Naive thymus-derived CD4-positive, alpha-beta T cell (primary cell): ENCODE measurements at regions of chr12 and their contacts with region 1.

Region 1: GRCh38 chr12:9897535-9897934 is 16.2 kb downstream of the KLRF2 start:
- DNase-seq: no peak
- ATAC-seq: no peak
- H3K4me3 ChIP-seq: no peak overlapping the region
- H3K4me3 Mint-ChIP-seq: no peak overlapping the region
- H3K27ac ChIP-seq: no peak overlapping the region
- H3K27ac Mint-ChIP-seq: no peak overlapping the region
- H3K4me1 ChIP-seq: no peaks in the 10 kb centered on the region
- H3K4me1 Mint-ChIP-seq: peaks cover 0 to 10% (median 4%) of the 10 kb centered on the region in 7 donors
- H3K27me3 ChIP-seq: no peaks in the 10 kb centered on the region
- H3K27me3 Mint-ChIP-seq: peaks cover 0 to 29% (median 0%) of the 10 kb centered on the region in 5 donors

Region 2: GRCh38 chr12:9883175-9883574 is 14.4 kb before region 1 on chr12:
- CTCF ChIA-PET with region 1: no interaction called
- POLR2A ChIA-PET with region 1: interaction called, 5 read pairs
- intact Hi-C with region 1: loop called in 1 of 2 experiments (anchors 1 kb)
- DNase-seq: no peak
- ATAC-seq: no peak
- H3K4me3 ChIP-seq: no peak overlapping the region
- H3K4me3 Mint-ChIP-seq: no peak overlapping the region
- H3K27ac ChIP-seq: no peak overlapping the region
- H3K27ac Mint-ChIP-seq: no peak overlapping the region
- H3K4me1 ChIP-seq: no peaks in the 10 kb centered on the region
- H3K4me1 Mint-ChIP-seq: peaks cover 4 to 18% (median 5%) of the 10 kb centered on the region in 7 donors
- H3K27me3 ChIP-seq: no peaks in the 10 kb centered on the region
- H3K27me3 Mint-ChIP-seq: peaks cover 0 to 6% (median 0%) of the 10 kb centered on the region in 5 donors

Region 3: GRCh38 chr12:11719678-11720099 is 1822.2 kb after region 1 on chr12:
- CTCF ChIA-PET with region 1: no interaction called
- POLR2A ChIA-PET with region 1: no interaction called
- intact Hi-C with region 1: loop called in 1 of 2 experiments (anchors 5 kb)
- DNase-seq: peak in 1 of 9 donors; percentile 59
- ATAC-seq: peak; percentile 88
- H3K4me3 ChIP-seq: no peak overlapping the region
- H3K4me3 Mint-ChIP-seq: no peak overlapping the region
- H3K27ac ChIP-seq: no peak overlapping the region
- H3K27ac Mint-ChIP-seq: no peak overlapping the region
- H3K4me1 ChIP-seq: no peaks in the 10 kb centered on the region
- H3K4me1 Mint-ChIP-seq: peaks cover 12 to 57% (median 24%) of the 10 kb centered on the region in 7 donors
- H3K27me3 ChIP-seq: no peaks in the 10 kb centered on the region
- H3K27me3 Mint-ChIP-seq: no peaks in the 10 kb centered on the region